HCT116 (cell line): ENCODE measurements at regions of chr21 and their contacts with region 1.

Region 1: DNA sequence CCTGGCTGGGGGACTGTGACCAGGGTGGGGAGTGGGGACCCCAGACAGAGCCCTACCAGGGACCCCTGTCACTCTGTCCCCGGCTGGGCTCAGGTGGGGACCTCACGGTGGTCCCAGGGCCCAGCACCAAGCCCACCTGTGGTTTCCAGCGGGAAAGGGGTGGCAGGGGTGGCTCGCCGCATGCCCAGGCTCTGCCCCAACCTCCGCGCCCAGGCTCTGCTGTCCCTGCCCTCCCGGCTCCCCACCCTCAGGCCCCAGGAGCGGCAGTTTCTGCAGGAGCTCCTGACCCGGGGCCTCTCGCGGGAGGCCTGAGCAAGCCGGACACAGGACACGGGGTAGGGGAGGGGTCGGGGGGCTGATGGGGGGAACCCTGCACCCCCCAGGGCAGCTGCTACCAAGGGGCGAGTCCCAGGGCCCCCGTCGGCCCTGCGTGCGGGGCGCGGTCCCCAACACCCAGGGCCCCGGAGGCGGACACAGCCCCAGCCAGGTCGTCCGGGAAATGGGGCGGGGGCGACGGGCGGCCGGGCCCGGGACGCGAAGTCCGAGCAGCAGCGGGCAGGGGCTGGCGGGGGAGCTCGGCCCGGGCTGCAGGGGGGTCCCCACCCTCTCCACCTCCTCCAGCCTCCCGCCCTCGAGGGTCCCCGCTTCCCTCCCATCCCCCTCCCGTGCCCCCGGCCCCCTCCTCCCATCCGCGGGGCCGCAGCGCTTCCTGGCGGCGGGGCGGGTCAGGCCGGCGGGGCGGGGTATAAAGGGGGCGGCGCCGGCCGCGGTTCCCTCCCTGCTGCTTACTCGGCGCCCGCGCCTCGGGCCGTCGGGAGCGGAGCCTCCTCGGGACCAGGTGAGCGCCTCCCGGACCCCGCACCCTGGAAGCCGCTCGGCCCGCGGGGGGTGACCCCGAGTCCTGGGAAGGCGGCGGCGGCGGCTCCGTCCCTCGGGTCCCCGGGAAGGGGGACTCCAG is at the start of gene COL6A2:
- DNase-seq: no peak
- ATAC-seq: peak; percentile 98
- H3K4me3 ChIP-seq: peak within 1 kb of the TSS; percentile 39 to 59
- H3K27ac ChIP-seq: peak within 1 kb of the TSS; percentile 59; the same call in 1 of the 2 replicates
- H3K4me1 ChIP-seq: peaks cover 6 to 13% of the 10 kb centered on the region in 2 experiments; a peak in 3 of 4 replicates
- H3K27me3 ChIP-seq: no peaks in the 10 kb centered on the region
- CTCF ChIP-seq: 0 out of 6 replicates have a peak, but pooled peaks of 1 of the 3 experiments have one; percentile 10
- POLR2A ChIP-seq: peak; percentile 70
- RAD21 ChIP-seq: peak; percentile 29; the same call in 1 of the 2 replicates
- total RNA-seq, gene COL6A2: 87.0 TPM

Region 2: GRCh38 chr21:45973659-45974072 is 123.9 kb before region 1 on chr21:
- CTCF ChIA-PET with region 1: no interaction called
- POLR2A ChIA-PET with region 1: no interaction called
- RAD21 ChIA-PET with region 1: no interaction called
- intact Hi-C with region 1: loop called (anchors 5 kb)
- DNase-seq: peak; percentile 35
- ATAC-seq: peak; percentile 52
- H3K4me3 ChIP-seq: peak overlapping the region; percentile 47 to 60
- H3K27ac ChIP-seq: peak overlapping the region; percentile 93
- H3K4me1 ChIP-seq: peaks cover 23 to 37% of the 10 kb centered on the region in 2 experiments
- H3K27me3 ChIP-seq: no peaks in the 10 kb centered on the region
- CTCF ChIP-seq: peak in 2 of 3 experiments; percentile 70 to 76; a peak in 4 of 6 replicates
- POLR2A ChIP-seq: no peak
- RAD21 ChIP-seq: no peak

Region 3: GRCh38 chr21:46153247-46154150 is 55.9 kb after region 1 on chr21:
- CTCF ChIA-PET with region 1: no interaction called
- POLR2A ChIA-PET with region 1: no interaction called
- RAD21 ChIA-PET with region 1: no interaction called
- intact Hi-C with region 1: loop called (anchors 2 kb)
- DNase-seq: no peak
- ATAC-seq: peak; percentile 91
- H3K4me3 ChIP-seq: no peak overlapping the region
- H3K27ac ChIP-seq: peak overlapping the region; percentile 69; the same call in 1 of the 2 replicates
- H3K4me1 ChIP-seq: peaks cover 7 to 8% of the 10 kb centered on the region in 2 experiments; a peak in 3 of 4 replicates
- H3K27me3 ChIP-seq: no peaks in the 10 kb centered on the region
- CTCF ChIP-seq: peak in 2 of 3 experiments; percentile 85 to 96; a peak in 4 of 6 replicates
- POLR2A ChIP-seq: no peak
- RAD21 ChIP-seq: no peak

Region 4: DNA sequence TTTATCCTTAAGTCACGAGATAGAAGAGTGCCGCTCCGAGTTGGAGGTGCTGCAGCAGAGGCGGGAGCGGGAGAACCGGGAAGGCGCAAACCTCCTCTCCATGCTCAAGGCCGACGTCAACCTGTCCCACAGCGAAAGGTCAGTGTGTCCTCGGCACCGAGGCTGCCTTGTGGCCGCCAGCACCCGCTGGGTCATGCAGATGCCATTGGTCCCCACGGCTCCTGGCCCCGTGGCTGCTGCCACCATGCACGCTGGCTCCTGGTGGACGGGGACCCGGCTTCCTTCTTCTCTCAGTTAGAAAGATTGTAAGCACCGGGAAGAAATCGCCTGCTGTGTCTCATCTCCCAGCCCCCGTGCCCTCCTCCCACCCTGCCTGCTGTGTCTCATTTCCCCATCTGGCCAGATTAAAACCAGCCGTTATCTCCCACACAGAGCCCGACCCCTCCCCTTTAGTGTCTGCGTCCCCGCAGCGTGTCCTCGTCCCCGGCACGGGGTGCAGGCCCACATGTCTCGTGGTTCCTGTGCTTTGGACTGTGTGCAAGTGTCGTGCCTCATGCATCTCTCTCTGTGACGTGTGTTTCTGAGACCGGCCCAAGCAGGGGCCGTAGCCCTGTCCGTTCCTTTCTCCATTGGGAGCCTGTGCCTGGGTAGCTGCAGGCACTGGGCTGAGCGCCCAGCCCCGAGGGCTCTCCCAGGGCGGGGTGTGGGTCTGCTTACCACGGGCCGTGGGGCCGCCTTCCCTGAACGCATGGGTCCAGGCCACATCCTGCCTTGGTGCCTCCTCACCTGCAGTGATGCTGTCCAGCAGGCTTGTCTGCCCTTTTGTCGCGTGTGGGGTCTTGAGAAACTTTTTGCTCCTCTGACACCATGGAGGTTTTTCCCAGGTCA is 288.5 kb after region 1 on chr21:
- CTCF ChIA-PET with region 1: no interaction called
- POLR2A ChIA-PET with region 1: no interaction called
- RAD21 ChIA-PET with region 1: no interaction called
- intact Hi-C with region 1: no loop called
- DNase-seq: no peak
- ATAC-seq: no peak
- H3K4me3 ChIP-seq: no peak overlapping the region
- H3K27ac ChIP-seq: no peak overlapping the region
- H3K4me1 ChIP-seq: no peaks in the 10 kb centered on the region
- H3K27me3 ChIP-seq: no peaks in the 10 kb centered on the region
- CTCF ChIP-seq: no peak
- POLR2A ChIP-seq: no peak
- RAD21 ChIP-seq: no peak